CD4-positive, alpha-beta memory T cell (primary cell): ENCODE measurements at regions of chr6 and their contacts with region 1.

Region 1: GRCh38 chr6:42453031-42453653 is 1.4 kb upstream of the TRERF1 start:
- DNase-seq: peak; percentile 75 to 82 (median 77)
- H3K4me3 ChIP-seq: peak overlapping the region; percentile 68 to 72
- H3K4me3 Mint-ChIP-seq: peak overlapping the region; percentile 93 to 100 (median 96)
- H3K27ac ChIP-seq: peak overlapping the region; percentile 36
- H3K27ac Mint-ChIP-seq: peak overlapping the region in 3 of 7 donors; percentile 10 to 80 (median 75)
- H3K4me1 ChIP-seq: peaks cover 31% of the 10 kb centered on the region
- H3K4me1 Mint-ChIP-seq: peaks cover 25 to 53% (median 29%) of the 10 kb centered on the region in 4 donors
- H3K27me3 ChIP-seq: no peaks in the 10 kb centered on the region
- H3K27me3 Mint-ChIP-seq: no peaks in the 10 kb centered on the region

Region 2: GRCh38 chr6:42279144-42279781 is 173.9 kb before region 1 on chr6:
- CTCF ChIA-PET with region 1: no interaction called
- POLR2A ChIA-PET with region 1: interaction called, 11 read pairs
- intact Hi-C with region 1: loop called (anchors 5 kb)
- DNase-seq: peak in 3 of 5 donors; percentile 14 to 21 (median 18)
- H3K4me3 ChIP-seq: no peak overlapping the region
- H3K4me3 Mint-ChIP-seq: peak overlapping the region in 7 of 8 donors; percentile 40 to 65 (median 55)
- H3K27ac ChIP-seq: peak overlapping the region; percentile 10
- H3K27ac Mint-ChIP-seq: peak overlapping the region; percentile 65 to 91 (median 87)
- H3K4me1 ChIP-seq: peaks cover 46% of the 10 kb centered on the region
- H3K4me1 Mint-ChIP-seq: peaks cover 33 to 58% (median 49%) of the 10 kb centered on the region in 4 donors
- H3K27me3 ChIP-seq: no peaks in the 10 kb centered on the region
- H3K27me3 Mint-ChIP-seq: no peaks in the 10 kb centered on the region

Region 3: GRCh38 chr6:42380228-42380979 is 72.7 kb before region 1 on chr6:
- CTCF ChIA-PET with region 1: interaction called, 4 read pairs
- POLR2A ChIA-PET with region 1: interaction called, 238 read pairs
- intact Hi-C with region 1: no loop called
- DNase-seq: no peak
- H3K4me3 ChIP-seq: no peak overlapping the region
- H3K4me3 Mint-ChIP-seq: peak overlapping the region in 4 of 8 donors; percentile 2 to 59 (median 38)
- H3K27ac ChIP-seq: no peak overlapping the region
- H3K27ac Mint-ChIP-seq: peak overlapping the region in 6 of 7 donors; percentile 42 to 77 (median 52)
- H3K4me1 ChIP-seq: peaks cover 74% of the 10 kb centered on the region
- H3K4me1 Mint-ChIP-seq: peaks cover 44 to 75% (median 63%) of the 10 kb centered on the region in 4 donors
- H3K27me3 ChIP-seq: no peaks in the 10 kb centered on the region
- H3K27me3 Mint-ChIP-seq: no peaks in the 10 kb centered on the region

Region 4: DNA sequence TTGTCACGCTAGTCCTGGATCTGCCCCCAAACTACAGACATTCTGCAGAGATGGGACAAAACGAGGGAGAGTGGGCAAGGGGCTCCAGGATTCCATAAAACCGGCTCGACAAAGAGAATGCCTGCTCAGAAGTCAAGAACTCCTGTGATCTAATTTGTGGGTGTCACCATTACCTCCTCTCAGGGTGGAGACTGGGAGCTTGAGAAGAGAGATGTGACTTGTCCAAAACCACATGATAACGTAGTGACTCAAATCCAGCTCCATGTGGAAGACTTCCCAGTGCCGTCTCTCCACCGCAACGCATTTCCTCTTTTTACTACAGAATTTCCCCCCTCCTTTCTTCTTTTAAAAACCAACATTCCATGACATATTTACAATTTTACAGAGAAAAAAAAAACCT is 45.8 kb before region 1 on chr6:
- CTCF ChIA-PET with region 1: interaction called, 8 read pairs
- POLR2A ChIA-PET with region 1: interaction called, 43 read pairs
- intact Hi-C with region 1: loop called (anchors 5 kb)
- DNase-seq: no peak
- H3K4me3 ChIP-seq: no peak overlapping the region
- H3K4me3 Mint-ChIP-seq: peak overlapping the region; percentile 17 to 75 (median 52)
- H3K27ac ChIP-seq: peak overlapping the region; percentile 8
- H3K27ac Mint-ChIP-seq: peak overlapping the region; percentile 28 to 91 (median 75)
- H3K4me1 ChIP-seq: peaks cover 66% of the 10 kb centered on the region
- H3K4me1 Mint-ChIP-seq: peaks cover 58 to 83% (median 69%) of the 10 kb centered on the region in 4 donors
- H3K27me3 ChIP-seq: no peaks in the 10 kb centered on the region
- H3K27me3 Mint-ChIP-seq: no peaks in the 10 kb centered on the region

Region 5: GRCh38 chr6:42428326-42429041 is 24.7 kb before region 1 on chr6:
- CTCF ChIA-PET with region 1: interaction called, 9 read pairs
- POLR2A ChIA-PET with region 1: interaction called, 112 read pairs
- intact Hi-C with region 1: loop called (anchors 2 kb)
- DNase-seq: peak; percentile 56 to 85 (median 62)
- H3K4me3 ChIP-seq: peak overlapping the region in 1 of 2 donors; percentile 25
- H3K4me3 Mint-ChIP-seq: peak overlapping the region; percentile 44 to 82 (median 66)
- H3K27ac ChIP-seq: peak overlapping the region; percentile 54
- H3K27ac Mint-ChIP-seq: peak overlapping the region; percentile 72 to 98 (median 93)
- H3K4me1 ChIP-seq: peaks cover 78% of the 10 kb centered on the region
- H3K4me1 Mint-ChIP-seq: peaks cover 54 to 77% (median 62%) of the 10 kb centered on the region in 4 donors
- H3K27me3 ChIP-seq: no peaks in the 10 kb centered on the region
- H3K27me3 Mint-ChIP-seq: no peaks in the 10 kb centered on the region

Region 6: DNA sequence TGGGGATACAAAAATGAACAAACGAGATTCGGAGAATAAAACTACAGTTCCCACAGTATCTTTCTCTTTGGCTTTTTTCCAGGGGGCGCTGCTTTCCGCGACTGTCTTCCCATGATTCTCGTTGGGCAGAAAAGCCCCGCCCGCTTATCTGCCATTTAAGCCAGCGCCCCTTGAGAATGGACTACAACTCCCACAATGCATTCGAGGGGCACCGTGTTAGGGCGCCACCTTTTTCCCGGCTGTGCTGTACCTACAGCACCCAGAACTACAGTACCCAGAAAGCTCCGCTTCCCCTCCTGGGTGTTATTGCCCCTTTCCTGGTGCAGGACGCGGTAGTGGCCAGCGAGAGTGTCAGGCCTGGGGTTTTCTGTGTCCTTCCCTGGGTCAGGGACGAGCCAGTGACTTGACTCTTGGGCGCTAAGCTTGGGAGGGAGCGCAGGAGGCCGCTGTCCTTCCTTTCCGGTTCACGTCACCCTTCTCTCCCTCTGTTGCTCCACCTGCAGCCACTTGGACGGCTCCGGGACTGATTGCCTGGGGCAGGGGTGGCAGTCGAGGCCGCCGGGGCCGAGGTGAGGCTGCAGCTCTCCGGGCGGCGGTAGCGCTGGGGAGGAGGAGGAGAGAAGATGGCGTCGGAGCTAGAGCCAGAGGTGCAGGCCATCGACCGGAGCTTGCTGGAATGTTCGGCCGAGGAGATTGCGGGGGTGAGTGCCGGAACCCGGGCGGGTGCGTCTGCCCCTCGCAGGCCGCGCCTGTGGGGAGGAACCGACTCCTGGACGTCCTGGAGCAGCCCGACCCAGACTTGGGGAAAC is 110.8 kb after region 1 on chr6 and contains the start of gene UBR2:
- CTCF ChIA-PET with region 1: no interaction called
- POLR2A ChIA-PET with region 1: interaction called, 14 read pairs
- intact Hi-C with region 1: no loop called
- DNase-seq: peak; percentile 92 to 98 (median 95)
- H3K4me3 ChIP-seq: peak within 1 kb of the TSS; percentile 98 to 100
- H3K4me3 Mint-ChIP-seq: peak within 1 kb of the TSS; percentile 92 to 100 (median 98)
- H3K27ac ChIP-seq: peak within 1 kb of the TSS; percentile 94
- H3K27ac Mint-ChIP-seq: peak within 1 kb of the TSS; percentile 90 to 98 (median 96)
- H3K4me1 ChIP-seq: peaks cover 33% of the 10 kb centered on the region
- H3K4me1 Mint-ChIP-seq: peaks cover 21 to 43% (median 28%) of the 10 kb centered on the region in 4 donors
- H3K27me3 ChIP-seq: no peaks in the 10 kb centered on the region
- H3K27me3 Mint-ChIP-seq: peaks cover 0 to 1% of the 10 kb centered on the region in 2 donors
- total RNA-seq, gene UBR2: 55.0 to 55.7 TPM